Ovary (tissue), 10 donors: ENCODE measurements at regions of chr2 and their contacts with region 1.

Region 1: GRCh38 chr2:86498468-86499250 is 57.5 kb downstream of the KDM3A start:
- DNase-seq: no peak
- H3K4me3 ChIP-seq: no peak overlapping the region
- H3K27ac ChIP-seq: no peak overlapping the region
- H3K4me1 ChIP-seq: no peaks in the 10 kb centered on the region
- H3K27me3 ChIP-seq: no peaks in the 10 kb centered on the region
- CTCF ChIP-seq: no peak
- EP300 ChIP-seq: no peak
- POLR2A ChIP-seq: no peak

Region 2: GRCh38 chr2:86221066-86221684 is 277.5 kb before region 1 on chr2:
- intact Hi-C with region 1: no loop called
- DNase-seq: peak in 4 of 5 donors; percentile 41 to 57 (median 53)
- H3K4me3 ChIP-seq: no peak overlapping the region
- H3K27ac ChIP-seq: no peak overlapping the region
- H3K4me1 ChIP-seq: peaks cover 7% of the 10 kb centered on the region
- H3K27me3 ChIP-seq: no peaks in the 10 kb centered on the region
- CTCF ChIP-seq: peak; percentile 42 to 56 (median 46)
- EP300 ChIP-seq: no peak
- POLR2A ChIP-seq: no peak

Region 3: DNA sequence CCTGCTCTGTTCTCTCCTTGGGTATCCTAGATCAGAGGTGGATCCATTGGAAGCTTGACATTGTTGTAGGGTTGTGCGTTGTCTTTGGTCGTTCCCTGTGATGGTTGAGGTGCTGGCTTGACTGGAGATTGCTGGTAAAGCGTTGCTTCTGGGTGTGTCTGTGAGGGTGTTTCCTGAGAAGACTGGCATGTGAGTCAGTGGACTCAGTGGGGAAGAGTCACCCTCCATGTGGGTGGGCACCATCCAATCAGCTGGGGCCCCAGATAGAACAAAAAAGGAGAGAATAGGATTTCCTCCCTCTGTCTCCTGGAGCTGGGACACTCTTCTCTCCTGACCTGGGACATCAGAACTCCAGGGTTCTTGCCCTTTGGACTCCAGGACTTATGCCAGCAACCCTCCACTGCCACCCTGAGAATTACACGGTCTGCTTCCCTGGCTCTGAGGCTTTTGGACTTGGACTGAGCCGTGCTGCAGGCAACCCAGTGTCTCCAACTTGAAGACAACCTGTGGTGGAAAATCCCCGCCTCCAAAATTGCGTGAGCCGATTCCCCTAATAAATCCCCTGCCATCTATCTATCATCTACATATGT is 146.4 kb before region 1 on chr2:
- intact Hi-C with region 1: no loop called
- DNase-seq: no peak
- H3K4me3 ChIP-seq: no peak overlapping the region
- H3K27ac ChIP-seq: no peak overlapping the region
- H3K4me1 ChIP-seq: no peaks in the 10 kb centered on the region
- H3K27me3 ChIP-seq: no peaks in the 10 kb centered on the region
- CTCF ChIP-seq: no peak
- EP300 ChIP-seq: no peak
- POLR2A ChIP-seq: no peak

Region 4: GRCh38 chr2:86477349-86477748 is 21.3 kb before region 1 on chr2:
- intact Hi-C with region 1: loop called in 1 of 4 experiments (anchors 1 kb)
- DNase-seq: no peak
- H3K4me3 ChIP-seq: no peak overlapping the region
- H3K27ac ChIP-seq: no peak overlapping the region
- H3K4me1 ChIP-seq: peaks cover 18% of the 10 kb centered on the region
- H3K27me3 ChIP-seq: no peaks in the 10 kb centered on the region
- CTCF ChIP-seq: no peak
- EP300 ChIP-seq: no peak
- POLR2A ChIP-seq: no peak